OCI-LY7 (cell line): ENCODE measurements at regions of chrX and their contacts with region 1.

Region 1: GRCh38 chrX:112841114-112841819 is 636 bp upstream of the AMOT start:
- DNase-seq: peak; percentile 86
- H3K4me3 ChIP-seq: peak overlapping the region; percentile 77
- H3K27ac ChIP-seq: no peak overlapping the region
- H3K4me1 ChIP-seq: peaks cover 7% of the 10 kb centered on the region
- CTCF ChIP-seq: no peak

Region 2: DNA sequence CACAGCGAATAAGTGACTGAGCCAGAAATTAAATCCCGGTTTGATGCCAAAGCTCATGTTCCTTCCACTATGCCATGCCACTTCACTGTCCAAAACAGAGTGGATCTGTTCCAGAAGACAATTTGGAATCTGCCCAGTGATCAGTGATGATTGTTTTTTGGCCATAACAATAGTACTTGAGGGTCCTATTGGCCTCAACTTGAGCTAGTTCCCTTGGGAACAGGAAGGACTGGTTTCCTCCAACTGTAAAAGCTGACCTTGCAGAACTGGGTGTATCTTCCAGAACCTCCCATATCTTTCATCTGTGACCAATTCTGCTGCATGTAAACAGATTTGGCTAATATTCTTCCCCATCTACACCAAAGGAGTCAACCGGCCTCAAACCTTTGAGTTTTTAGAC is 593.6 kb before region 1 on chrX:
- CTCF ChIA-PET with region 1: no interaction called
- POLR2A ChIA-PET with region 1: no interaction called
- intact Hi-C with region 1: no loop called
- DNase-seq: no peak
- H3K4me3 ChIP-seq: no peak overlapping the region
- H3K27ac ChIP-seq: no peak overlapping the region
- H3K4me1 ChIP-seq: no peaks in the 10 kb centered on the region
- CTCF ChIP-seq: no peak

Region 3: GRCh38 chrX:112678831-112679230 is 162.4 kb before region 1 on chrX:
- CTCF ChIA-PET with region 1: no interaction called
- POLR2A ChIA-PET with region 1: no interaction called
- intact Hi-C with region 1: loop called (anchors 10 kb)
- DNase-seq: no peak
- H3K4me3 ChIP-seq: peak overlapping the region; percentile 72
- H3K27ac ChIP-seq: peak overlapping the region; percentile 85
- H3K4me1 ChIP-seq: peaks cover 16% of the 10 kb centered on the region
- CTCF ChIP-seq: no peak

Region 4: GRCh38 chrX:112760697-112761096 is 80.6 kb before region 1 on chrX:
- CTCF ChIA-PET with region 1: no interaction called
- POLR2A ChIA-PET with region 1: interaction called, 4 read pairs
- intact Hi-C with region 1: loop called (anchors 5 kb)
- DNase-seq: peak; percentile 18
- H3K4me3 ChIP-seq: no peak overlapping the region
- H3K27ac ChIP-seq: peak overlapping the region; percentile 62
- H3K4me1 ChIP-seq: peaks cover 24% of the 10 kb centered on the region
- CTCF ChIP-seq: peak; percentile 63

Region 5: GRCh38 chrX:112851806-112852205 is 10.5 kb after region 1 on chrX:
- CTCF ChIA-PET with region 1: no interaction called
- POLR2A ChIA-PET with region 1: interaction called, 19 read pairs
- intact Hi-C with region 1: no loop called
- DNase-seq: no peak
- H3K4me3 ChIP-seq: no peak overlapping the region
- H3K27ac ChIP-seq: no peak overlapping the region
- H3K4me1 ChIP-seq: peaks cover 35% of the 10 kb centered on the region
- CTCF ChIP-seq: no peak